ENCODE measurements at regions of chr21 and their contacts with region 1.

Region 1: GRCh38 chr21:45554477-45555175 is 12.4 kb upstream of the SLC19A1 start:
- DNase-seq: peak; percentile 81 to 97 (median 91)
- ATAC-seq: peak; percentile 83
- H3K4me3 ChIP-seq: peak overlapping the region; percentile 67
- H3K4me3 Mint-ChIP-seq: peak overlapping the region; percentile 87
- H3K27ac ChIP-seq: no peak overlapping the region
- H3K27ac Mint-ChIP-seq: peak overlapping the region; percentile 89
- H3K4me1 ChIP-seq: peaks cover 47% of the 10 kb centered on the region
- H3K4me1 Mint-ChIP-seq: peaks cover 29% of the 10 kb centered on the region
- H3K27me3 ChIP-seq: no peaks in the 10 kb centered on the region
- H3K27me3 Mint-ChIP-seq: no peaks in the 10 kb centered on the region
- CTCF ChIP-seq: peak; percentile 72

Region 2: DNA sequence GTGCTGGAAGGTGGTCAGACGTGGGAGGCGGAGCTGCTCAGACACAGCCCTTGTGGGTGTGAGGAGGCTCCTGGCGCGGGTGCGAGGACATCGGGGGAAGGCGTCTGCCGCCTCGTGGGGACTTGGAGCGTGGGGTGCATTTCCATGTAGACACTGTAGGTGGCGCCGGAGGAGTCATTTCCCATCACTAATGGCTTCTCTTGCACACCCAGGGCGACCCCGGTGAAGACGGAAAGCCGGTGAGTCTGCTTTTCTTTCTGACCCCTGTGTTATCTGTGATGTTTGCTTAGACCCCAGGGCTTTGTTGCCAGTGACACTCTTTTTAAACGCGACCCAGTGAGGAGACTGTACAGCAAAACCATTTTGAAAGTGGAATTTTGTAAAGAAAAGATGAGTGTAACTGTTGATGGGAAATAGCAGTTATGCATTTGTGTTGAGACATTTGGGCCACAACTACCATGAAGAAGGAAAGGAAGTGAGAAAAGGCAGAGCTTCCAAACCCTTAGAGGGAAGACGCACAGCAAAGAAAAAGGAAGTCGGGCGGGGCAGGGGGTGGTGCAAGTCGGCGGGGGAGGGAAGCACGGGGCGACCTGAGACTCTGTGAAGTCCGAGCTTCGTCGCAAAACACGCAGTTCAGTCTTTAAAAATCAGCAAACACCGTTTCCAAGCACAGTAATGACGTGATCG is 76.4 kb before region 1 on chr21:
- CTCF ChIA-PET with region 1: no interaction called
- POLR2A ChIA-PET with region 1: no interaction called
- intact Hi-C with region 1: loop called in 1 of 2 experiments (anchors 2 kb)
- DNase-seq: peak; percentile 65 to 91 (median 78)
- ATAC-seq: peak; percentile 78
- H3K4me3 ChIP-seq: peak overlapping the region; percentile 54
- H3K4me3 Mint-ChIP-seq: peak overlapping the region; percentile 83
- H3K27ac ChIP-seq: peak overlapping the region; percentile 89 to 95
- H3K27ac Mint-ChIP-seq: peak overlapping the region; percentile 95
- H3K4me1 ChIP-seq: peaks cover 79% of the 10 kb centered on the region
- H3K4me1 Mint-ChIP-seq: peaks cover 43% of the 10 kb centered on the region
- H3K27me3 ChIP-seq: no peaks in the 10 kb centered on the region
- H3K27me3 Mint-ChIP-seq: no peaks in the 10 kb centered on the region
- CTCF ChIP-seq: peak; percentile 91

Region 3: DNA sequence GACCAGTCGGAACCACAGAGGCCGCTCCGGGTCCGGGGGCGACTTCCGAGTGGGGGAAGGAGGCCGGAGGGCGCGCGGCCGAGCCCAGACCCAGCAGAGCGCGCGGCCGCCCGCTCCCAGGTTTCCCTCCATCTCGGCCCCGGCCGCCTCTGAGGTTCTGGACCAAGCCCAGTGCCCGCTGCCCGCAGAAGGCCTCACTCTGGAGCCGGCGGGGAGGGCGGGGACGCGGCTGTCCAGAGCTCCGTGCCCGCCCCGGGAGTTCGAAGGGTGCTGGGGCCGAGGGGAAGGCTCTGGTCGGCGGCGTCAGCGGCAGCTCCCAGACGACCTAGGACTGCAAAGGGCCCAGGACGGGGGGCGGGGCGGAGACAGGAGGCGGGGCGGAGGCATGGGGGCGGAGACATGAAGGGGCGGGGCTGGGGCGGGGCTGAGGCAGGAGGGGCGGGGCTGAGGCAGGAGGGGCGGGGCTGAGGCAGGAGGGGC is 35.7 kb after region 1 on chr21:
- CTCF ChIA-PET with region 1: interaction called, 3 read pairs
- POLR2A ChIA-PET with region 1: interaction called, 5 read pairs
- intact Hi-C with region 1: loop called in 1 of 2 experiments (anchors 2 kb)
- DNase-seq: peak; percentile 65 to 86 (median 72)
- ATAC-seq: peak; percentile 57
- H3K4me3 ChIP-seq: peak overlapping the region; percentile 56
- H3K4me3 Mint-ChIP-seq: peak overlapping the region; percentile 58
- H3K27ac ChIP-seq: no peak overlapping the region
- H3K27ac Mint-ChIP-seq: no peak overlapping the region
- H3K4me1 ChIP-seq: peaks cover 36% of the 10 kb centered on the region
- H3K4me1 Mint-ChIP-seq: peaks cover 10% of the 10 kb centered on the region
- H3K27me3 ChIP-seq: peaks cover 0 to 7% of the 10 kb centered on the region in 2 experiments
- H3K27me3 Mint-ChIP-seq: peaks cover 10% of the 10 kb centered on the region
- CTCF ChIP-seq: no peak

Region 4: DNA sequence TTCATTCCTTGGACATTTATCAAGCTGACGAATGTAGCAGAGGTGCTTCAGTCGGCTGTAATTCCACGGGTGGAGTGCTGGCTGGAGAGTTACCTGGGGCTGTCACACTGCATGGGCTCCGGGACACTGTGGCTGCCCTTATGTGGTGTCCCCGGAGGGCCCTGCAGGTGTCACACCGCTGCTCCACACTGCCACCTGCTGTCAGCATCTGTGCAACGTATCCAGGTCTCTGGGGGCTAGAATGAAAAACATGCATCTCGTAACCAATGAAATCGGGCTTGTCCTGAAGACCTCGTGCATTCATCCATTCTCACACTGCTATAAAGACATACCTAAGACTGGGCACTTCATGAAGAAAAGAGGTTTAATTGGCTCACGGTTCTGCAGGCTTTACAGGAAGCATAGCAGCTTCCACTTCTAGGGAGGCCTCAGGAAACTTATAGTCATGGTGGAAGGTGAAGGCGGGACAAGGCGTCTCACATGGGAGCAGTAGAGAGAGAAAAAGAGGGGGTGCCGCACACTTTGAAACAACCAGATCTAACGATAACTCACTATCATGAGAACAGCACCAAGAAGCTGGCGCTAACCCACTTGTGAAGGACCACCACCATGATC is 42.2 kb after region 1 on chr21:
- CTCF ChIA-PET with region 1: interaction called, 10 read pairs
- POLR2A ChIA-PET with region 1: interaction called, 5 read pairs
- intact Hi-C with region 1: loop called (anchors 1 kb)
- DNase-seq: peak; percentile 79 to 93 (median 84)
- ATAC-seq: peak; percentile 65
- H3K4me3 ChIP-seq: no peak overlapping the region
- H3K4me3 Mint-ChIP-seq: no peak overlapping the region
- H3K27ac ChIP-seq: no peak overlapping the region
- H3K27ac Mint-ChIP-seq: peak overlapping the region; percentile 67
- H3K4me1 ChIP-seq: peaks cover 26% of the 10 kb centered on the region
- H3K4me1 Mint-ChIP-seq: peaks cover 19% of the 10 kb centered on the region
- H3K27me3 ChIP-seq: no peaks in the 10 kb centered on the region
- H3K27me3 Mint-ChIP-seq: no peaks in the 10 kb centered on the region
- CTCF ChIP-seq: peak; percentile 87

Region 5: GRCh38 chr21:45643021-45643980 is 88.7 kb after region 1 on chr21 and contains the start of gene PCBP3:
- CTCF ChIA-PET with region 1: no interaction called
- POLR2A ChIA-PET with region 1: no interaction called
- intact Hi-C with region 1: loop called (anchors 1 to 10 kb)
- DNase-seq: peak; percentile 89 to 99 (median 96)
- ATAC-seq: peak; percentile 78
- H3K4me3 ChIP-seq: peak within 1 kb of the TSS; percentile 24
- H3K4me3 Mint-ChIP-seq: peak within 1 kb of the TSS; percentile 77
- H3K27ac ChIP-seq: no peak within 1 kb of the TSS
- H3K27ac Mint-ChIP-seq: peak within 1 kb of the TSS; percentile 97
- H3K4me1 ChIP-seq: peaks cover 41% of the 10 kb centered on the region
- H3K4me1 Mint-ChIP-seq: peaks cover 53% of the 10 kb centered on the region
- H3K27me3 ChIP-seq: peaks cover 14 to 17% of the 10 kb centered on the region in 2 experiments
- H3K27me3 Mint-ChIP-seq: peaks cover 25% of the 10 kb centered on the region
- CTCF ChIP-seq: no peak
- total RNA-seq, gene PCBP3: 3.4 to 3.8 TPM

Region 6: DNA sequence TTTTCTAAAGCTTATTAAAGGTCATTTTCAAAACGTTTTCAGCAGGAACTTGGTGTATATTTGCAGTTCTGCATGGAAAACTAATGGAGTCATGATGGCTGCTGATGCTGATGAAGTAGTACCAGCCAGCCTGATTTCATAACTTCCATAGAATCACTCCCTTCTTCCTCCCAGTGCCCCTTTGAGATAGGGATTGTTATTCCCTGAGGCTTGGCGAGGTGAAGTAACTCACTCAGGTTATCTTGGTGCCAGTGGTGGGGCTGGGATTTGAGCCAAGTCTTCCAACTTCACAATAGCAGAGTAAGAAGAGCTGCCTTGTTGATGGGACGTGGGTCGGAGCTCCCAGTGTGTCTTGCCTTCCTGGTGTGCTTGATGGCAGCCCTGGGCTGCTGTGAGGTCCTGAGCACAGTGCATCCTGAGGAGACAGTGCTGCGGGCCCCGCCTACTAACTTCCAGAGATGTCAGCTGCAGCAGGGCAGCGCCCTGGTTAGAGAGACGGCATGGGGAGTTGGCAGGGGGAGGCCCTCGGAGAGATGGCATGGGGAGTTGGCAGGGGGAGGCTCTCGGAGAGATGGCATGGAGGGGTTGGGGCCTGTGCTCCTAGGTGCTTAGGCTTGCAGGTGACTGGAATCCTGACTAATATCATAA is 181.5 kb after region 1 on chr21:
- CTCF ChIA-PET with region 1: no interaction called
- POLR2A ChIA-PET with region 1: no interaction called
- intact Hi-C with region 1: no loop called
- DNase-seq: no peak
- ATAC-seq: no peak
- H3K4me3 ChIP-seq: no peak overlapping the region
- H3K4me3 Mint-ChIP-seq: no peak overlapping the region
- H3K27ac ChIP-seq: no peak overlapping the region
- H3K27ac Mint-ChIP-seq: peak overlapping the region; percentile 45
- H3K4me1 ChIP-seq: peaks cover 4% of the 10 kb centered on the region
- H3K4me1 Mint-ChIP-seq: peaks cover 5% of the 10 kb centered on the region
- H3K27me3 ChIP-seq: no peaks in the 10 kb centered on the region
- H3K27me3 Mint-ChIP-seq: no peaks in the 10 kb centered on the region
- CTCF ChIP-seq: no peak

Region 7: DNA sequence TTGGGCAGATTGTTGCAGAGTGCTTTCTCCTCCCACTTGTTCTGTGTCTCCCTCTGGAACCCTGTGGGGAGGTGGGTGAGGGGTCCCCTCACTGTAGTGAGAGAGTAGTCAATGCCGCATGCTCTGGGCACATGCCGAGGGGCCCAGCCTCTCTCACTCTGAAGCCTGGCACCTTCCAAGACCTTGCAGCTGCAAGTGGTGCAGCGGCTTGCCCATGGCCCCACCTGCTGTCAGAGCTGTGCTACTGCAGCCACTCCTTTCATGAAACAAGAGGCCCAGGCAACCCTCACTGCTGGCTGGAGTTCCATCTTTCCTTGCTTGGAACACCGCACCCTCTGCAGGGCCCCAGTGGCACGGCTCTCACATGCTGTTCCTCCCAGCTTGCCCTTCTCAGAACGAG is 368.5 kb after region 1 on chr21:
- CTCF ChIA-PET with region 1: no interaction called
- POLR2A ChIA-PET with region 1: no interaction called
- intact Hi-C with region 1: loop called in 1 of 2 experiments (anchors 10 kb)
- DNase-seq: peak; percentile 56 to 81 (median 69)
- ATAC-seq: peak; percentile 98
- H3K4me3 ChIP-seq: no peak overlapping the region
- H3K4me3 Mint-ChIP-seq: no peak overlapping the region
- H3K27ac ChIP-seq: no peak overlapping the region
- H3K27ac Mint-ChIP-seq: no peak overlapping the region
- H3K4me1 ChIP-seq: peaks cover 18% of the 10 kb centered on the region
- H3K4me1 Mint-ChIP-seq: peaks cover 4% of the 10 kb centered on the region
- H3K27me3 ChIP-seq: no peaks in the 10 kb centered on the region
- H3K27me3 Mint-ChIP-seq: no peaks in the 10 kb centered on the region
- CTCF ChIP-seq: peak; percentile 75

Region 8: GRCh38 chr21:45981151-45982089 is 426.8 kb after region 1 on chr21 and contains the start of gene COL6A1:
- CTCF ChIA-PET with region 1: no interaction called
- POLR2A ChIA-PET with region 1: no interaction called
- intact Hi-C with region 1: loop called in 1 of 2 experiments (anchors 10 kb)
- DNase-seq: peak; percentile 36 to 85 (median 54)
- ATAC-seq: peak; percentile 79
- H3K4me3 ChIP-seq: peak within 1 kb of the TSS; percentile 59
- H3K4me3 Mint-ChIP-seq: peak within 1 kb of the TSS; percentile 76
- H3K27ac ChIP-seq: no peak within 1 kb of the TSS
- H3K27ac Mint-ChIP-seq: no peak within 1 kb of the TSS
- H3K4me1 ChIP-seq: peaks cover 32% of the 10 kb centered on the region
- H3K4me1 Mint-ChIP-seq: peaks cover 5% of the 10 kb centered on the region
- H3K27me3 ChIP-seq: peaks cover 5 to 6% of the 10 kb centered on the region in 2 experiments
- H3K27me3 Mint-ChIP-seq: peaks cover 6% of the 10 kb centered on the region
- CTCF ChIP-seq: no peak
- total RNA-seq, gene COL6A1: 8.0 to 8.5 TPM

Region 9: DNA sequence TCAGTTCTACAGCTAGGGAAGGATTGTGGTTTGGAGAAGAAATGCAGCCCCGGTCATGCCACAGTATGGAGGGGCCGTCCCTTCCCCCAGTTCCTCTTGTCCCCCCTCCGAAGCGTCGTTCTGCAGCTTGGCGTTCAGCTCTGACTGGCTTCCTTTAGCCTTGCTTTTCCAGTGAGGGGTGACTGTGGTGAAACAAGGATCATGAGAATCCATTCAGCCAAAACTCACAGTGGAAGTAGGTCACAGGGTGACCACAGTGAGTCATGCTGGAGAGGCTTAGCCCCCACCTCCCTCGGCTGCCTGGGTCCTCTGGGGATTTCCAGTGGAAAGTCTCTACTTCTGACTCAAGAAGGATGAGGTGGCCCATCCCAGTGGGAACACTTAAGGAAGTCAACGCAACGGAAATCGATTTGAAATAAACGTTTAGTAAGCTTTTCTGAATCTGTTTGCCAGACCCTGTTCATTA is 506.0 kb after region 1 on chr21:
- CTCF ChIA-PET with region 1: no interaction called
- POLR2A ChIA-PET with region 1: no interaction called
- intact Hi-C with region 1: no loop called
- DNase-seq: peak in 1 of 14 experiments; percentile 38
- ATAC-seq: no peak
- H3K4me3 ChIP-seq: no peak overlapping the region
- H3K4me3 Mint-ChIP-seq: no peak overlapping the region
- H3K27ac ChIP-seq: no peak overlapping the region
- H3K27ac Mint-ChIP-seq: no peak overlapping the region
- H3K4me1 ChIP-seq: peaks cover 12% of the 10 kb centered on the region
- H3K4me1 Mint-ChIP-seq: peaks cover 14% of the 10 kb centered on the region
- H3K27me3 ChIP-seq: peaks cover 37 to 56% of the 10 kb centered on the region in 2 experiments
- H3K27me3 Mint-ChIP-seq: peaks cover 68% of the 10 kb centered on the region
- CTCF ChIP-seq: no peak